ENCODE measurements at regions of chr3 and their contacts with region 1.

Region 1: GRCh38 chr3:81789691-81790090 is 28.2 kb upstream of the GBE1 start:
- DNase-seq: no peak
- ATAC-seq: no peak

Region 2: GRCh38 chr3:81734742-81735141 is 54.9 kb before region 1 on chr3:
- intact Hi-C with region 1: no loop called
- DNase-seq: no peak
- ATAC-seq: no peak

Region 3: DNA sequence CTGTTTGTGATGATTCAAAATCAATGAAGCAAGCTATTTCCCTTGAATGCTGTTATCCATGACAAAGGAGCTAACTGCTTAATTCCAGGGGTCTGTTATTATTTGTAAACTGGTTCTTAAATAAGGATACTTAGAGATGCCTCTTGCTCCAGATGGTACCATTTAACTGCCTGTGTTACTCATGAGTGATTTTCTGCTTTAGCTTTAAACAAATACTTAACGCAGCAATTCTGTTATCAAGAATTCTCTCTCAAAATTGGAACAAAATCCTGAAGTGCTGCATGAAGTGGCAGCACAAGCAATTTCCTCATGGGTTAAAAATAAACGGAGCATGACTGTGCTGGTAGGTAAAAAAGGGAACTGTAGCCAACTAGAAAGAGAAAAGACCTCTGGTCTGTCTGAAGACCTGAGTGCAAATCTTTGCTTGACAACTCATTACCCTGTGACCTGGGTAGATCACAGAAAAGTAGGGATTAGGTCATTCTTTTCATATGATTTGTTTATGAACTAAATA is 34.2 kb after region 1 on chr3:
- intact Hi-C with region 1: loop called (anchors 1 kb)
- DNase-seq: no peak
- ATAC-seq: peak; percentile 79

Region 4: DNA sequence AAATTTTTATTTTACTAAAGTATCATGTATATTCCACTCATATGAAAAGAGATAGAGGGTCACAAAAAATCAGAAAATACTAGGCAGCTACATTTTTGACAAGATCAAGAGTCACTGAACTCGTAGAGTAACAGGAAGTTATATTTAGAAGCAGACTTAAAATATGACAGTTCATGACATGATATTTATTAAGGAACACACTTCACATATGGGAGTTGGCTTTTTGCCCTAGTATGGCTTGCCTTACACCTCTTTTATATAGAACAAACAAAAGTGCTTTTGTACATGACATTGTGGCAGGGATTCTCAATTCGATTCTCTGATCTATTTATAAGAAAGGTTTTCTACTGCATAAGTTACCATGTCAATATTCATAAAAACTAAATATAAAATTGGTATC is 51.8 kb after region 1 on chr3:
- intact Hi-C with region 1: loop called (anchors 5 kb)
- DNase-seq: no peak
- ATAC-seq: no peak

Region 5: DNA sequence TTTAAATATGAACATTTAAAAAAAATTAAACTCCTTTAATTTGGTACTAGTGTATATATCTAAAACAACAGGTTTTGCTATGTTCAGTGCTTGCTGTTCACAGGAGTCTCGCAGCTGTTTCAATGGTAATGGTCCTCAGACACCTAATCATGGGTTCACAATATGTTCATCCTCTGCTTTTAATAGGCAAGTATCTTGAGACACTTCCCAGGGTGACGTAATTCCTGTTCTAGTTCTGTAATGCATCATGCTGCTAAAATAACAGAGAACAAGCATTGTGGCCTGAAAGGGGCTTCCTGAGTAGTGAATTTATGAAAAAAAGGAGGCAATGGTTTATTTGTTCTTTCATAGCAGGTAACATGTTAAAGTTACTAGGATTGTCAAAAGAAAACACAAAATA is 597.0 kb after region 1 on chr3:
- intact Hi-C with region 1: no loop called
- DNase-seq: no peak
- ATAC-seq: no peak

Region 6: GRCh38 chr3:83131236-83131635 is 1341.5 kb after region 1 on chr3:
- intact Hi-C with region 1: no loop called
- DNase-seq: no peak
- ATAC-seq: no peak

Measured in Right ventricle myocardium inferior (tissue), 1 donor.